CD4-positive, alpha-beta T cell (primary cell): ENCODE measurements at regions of chr5 and their contacts with region 1.

Region 1: GRCh38 chr5:154072414-154073171 is 33.8 kb downstream of the MFAP3 start:
- DNase-seq: peak; percentile 68 to 89 (median 81)
- ATAC-seq: peak; percentile 81
- H3K4me3 ChIP-seq: no peak overlapping the region
- H3K4me3 Mint-ChIP-seq: no peak overlapping the region
- H3K27ac ChIP-seq: no peak overlapping the region
- H3K27ac Mint-ChIP-seq: no peak overlapping the region
- H3K4me1 ChIP-seq: peaks cover 22% of the 10 kb centered on the region
- H3K4me1 Mint-ChIP-seq: peaks cover 17% of the 10 kb centered on the region
- H3K27me3 ChIP-seq: no peaks in the 10 kb centered on the region
- H3K27me3 Mint-ChIP-seq: no peaks in the 10 kb centered on the region
- CTCF ChIP-seq: peak; percentile 96

Region 2: DNA sequence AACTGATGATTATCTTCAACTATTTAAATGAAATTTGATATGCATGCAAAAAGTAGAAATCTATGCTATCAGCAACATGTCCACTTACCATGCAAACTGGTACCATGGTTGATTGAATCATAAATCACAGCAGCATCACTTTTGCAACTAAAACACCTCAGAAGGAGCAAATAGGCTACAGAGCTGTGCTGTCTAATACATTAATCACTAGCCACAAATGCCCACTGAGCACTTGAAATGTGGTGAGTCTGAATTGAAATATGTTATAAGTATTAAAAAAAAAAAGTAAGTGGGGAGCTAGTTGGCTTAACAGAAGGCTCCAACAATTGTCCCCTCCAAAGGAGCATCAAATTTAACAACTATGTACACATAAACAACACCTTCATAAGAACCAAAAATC is 146.4 kb before region 1 on chr5:
- CTCF ChIA-PET with region 1: no interaction called
- POLR2A ChIA-PET with region 1: no interaction called
- intact Hi-C with region 1: no loop called
- DNase-seq: no peak
- ATAC-seq: no peak
- H3K4me3 ChIP-seq: no peak overlapping the region
- H3K4me3 Mint-ChIP-seq: no peak overlapping the region
- H3K27ac ChIP-seq: no peak overlapping the region
- H3K27ac Mint-ChIP-seq: no peak overlapping the region
- H3K4me1 ChIP-seq: no peaks in the 10 kb centered on the region
- H3K4me1 Mint-ChIP-seq: no peaks in the 10 kb centered on the region
- H3K27me3 ChIP-seq: peaks cover 0 to 3% of the 10 kb centered on the region in 2 experiments
- H3K27me3 Mint-ChIP-seq: peaks cover 32% of the 10 kb centered on the region
- CTCF ChIP-seq: no peak

Region 3: DNA sequence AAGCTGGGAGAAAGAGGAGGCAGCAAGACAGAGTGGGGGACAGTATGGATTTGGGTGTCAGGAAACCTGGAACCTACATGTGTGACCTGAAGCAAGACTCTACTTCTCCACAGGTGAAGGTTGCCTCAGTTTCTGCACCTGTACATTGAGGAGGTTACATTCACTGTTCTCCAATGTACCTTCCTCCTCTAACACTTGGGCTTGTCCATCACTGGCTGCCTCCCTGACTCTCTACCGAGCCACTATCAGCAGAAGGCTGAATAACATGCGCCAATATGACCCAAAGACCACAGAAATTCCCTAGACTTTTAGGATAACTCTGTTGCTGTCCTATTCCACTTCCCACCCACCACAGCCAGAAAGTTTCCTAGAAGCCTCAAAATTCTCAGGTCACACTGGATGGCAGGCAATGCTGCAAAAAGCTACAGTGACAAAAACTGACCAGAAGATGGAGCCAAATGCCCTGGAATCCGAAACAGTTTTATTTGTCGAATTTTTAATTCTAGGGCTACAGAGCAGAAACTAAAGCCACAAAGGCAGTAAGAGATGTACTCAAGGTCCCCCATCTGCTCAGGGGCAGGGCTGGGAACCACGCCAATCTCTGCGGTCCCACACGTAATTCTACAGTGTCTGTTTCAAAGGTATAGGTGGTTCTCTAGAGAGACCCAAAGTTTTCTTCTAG is 98.3 kb before region 1 on chr5:
- CTCF ChIA-PET with region 1: no interaction called
- POLR2A ChIA-PET with region 1: no interaction called
- intact Hi-C with region 1: loop called in 1 of 2 experiments (anchors 5 kb)
- DNase-seq: peak in 5 of 14 experiments; percentile 10 to 62 (median 40)
- ATAC-seq: peak; percentile 49
- H3K4me3 ChIP-seq: no peak overlapping the region
- H3K4me3 Mint-ChIP-seq: no peak overlapping the region
- H3K27ac ChIP-seq: no peak overlapping the region
- H3K27ac Mint-ChIP-seq: no peak overlapping the region
- H3K4me1 ChIP-seq: peaks cover 3% of the 10 kb centered on the region
- H3K4me1 Mint-ChIP-seq: no peaks in the 10 kb centered on the region
- H3K27me3 ChIP-seq: peaks cover 0 to 5% of the 10 kb centered on the region in 2 experiments
- H3K27me3 Mint-ChIP-seq: peaks cover 12% of the 10 kb centered on the region
- CTCF ChIP-seq: peak; percentile 69

Region 4: GRCh38 chr5:154087257-154087656 is 14.7 kb after region 1 on chr5:
- CTCF ChIA-PET with region 1: interaction called, 23 read pairs
- POLR2A ChIA-PET with region 1: interaction called, 3 read pairs
- intact Hi-C with region 1: no loop called
- DNase-seq: no peak
- ATAC-seq: no peak
- H3K4me3 ChIP-seq: no peak overlapping the region
- H3K4me3 Mint-ChIP-seq: no peak overlapping the region
- H3K27ac ChIP-seq: no peak overlapping the region
- H3K27ac Mint-ChIP-seq: no peak overlapping the region
- H3K4me1 ChIP-seq: no peaks in the 10 kb centered on the region
- H3K4me1 Mint-ChIP-seq: peaks cover 4% of the 10 kb centered on the region
- H3K27me3 ChIP-seq: no peaks in the 10 kb centered on the region
- H3K27me3 Mint-ChIP-seq: peaks cover 22% of the 10 kb centered on the region
- CTCF ChIP-seq: no peak

Region 5: DNA sequence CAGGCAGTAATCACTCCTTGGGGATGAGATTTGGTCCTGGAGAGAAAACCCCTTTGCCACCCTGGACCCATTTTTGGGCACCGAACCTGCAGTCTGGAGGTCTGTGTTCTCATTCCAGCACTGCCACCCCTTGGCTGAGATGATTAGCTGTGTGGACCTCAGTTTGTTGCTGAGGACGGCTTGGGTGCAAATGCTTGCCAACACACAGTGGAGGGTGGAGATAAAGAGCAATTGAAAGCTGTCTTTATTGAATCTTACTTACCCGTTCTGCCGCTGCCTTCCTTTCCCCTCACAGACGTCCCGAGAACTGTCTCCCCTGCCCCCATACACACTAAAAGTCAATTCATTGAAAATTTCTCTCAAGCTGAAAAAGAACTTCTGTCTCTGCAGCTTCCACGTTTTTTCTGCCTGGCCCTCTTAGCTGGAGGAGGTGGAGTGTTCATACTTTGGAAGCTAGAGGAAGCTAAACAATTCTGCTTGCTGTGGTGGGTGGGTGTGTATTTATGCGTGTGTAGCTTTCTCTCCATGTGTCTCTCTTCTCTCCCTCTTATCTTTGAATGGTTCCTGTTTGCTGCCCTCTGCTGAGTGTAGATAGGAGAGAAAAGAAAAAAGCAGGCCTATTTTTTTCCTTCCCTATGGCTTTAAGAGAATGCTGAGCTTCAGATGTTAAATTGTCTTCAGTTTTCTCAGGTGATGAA is 124.5 kb after region 1 on chr5:
- CTCF ChIA-PET with region 1: interaction called, 11 read pairs
- POLR2A ChIA-PET with region 1: interaction called, 14 read pairs
- intact Hi-C with region 1: loop called (anchors 2 to 5 kb)
- DNase-seq: peak in 4 of 14 experiments; percentile 17 to 47 (median 44)
- ATAC-seq: peak; percentile 55
- H3K4me3 ChIP-seq: no peak overlapping the region
- H3K4me3 Mint-ChIP-seq: peak overlapping the region; percentile 37
- H3K27ac ChIP-seq: peak overlapping the region in 1 of 2 donors; percentile 68
- H3K27ac Mint-ChIP-seq: peak overlapping the region; percentile 89
- H3K4me1 ChIP-seq: peaks cover 58% of the 10 kb centered on the region
- H3K4me1 Mint-ChIP-seq: peaks cover 62% of the 10 kb centered on the region
- H3K27me3 ChIP-seq: no peaks in the 10 kb centered on the region
- H3K27me3 Mint-ChIP-seq: no peaks in the 10 kb centered on the region
- CTCF ChIP-seq: peak; percentile 45

Region 6: DNA sequence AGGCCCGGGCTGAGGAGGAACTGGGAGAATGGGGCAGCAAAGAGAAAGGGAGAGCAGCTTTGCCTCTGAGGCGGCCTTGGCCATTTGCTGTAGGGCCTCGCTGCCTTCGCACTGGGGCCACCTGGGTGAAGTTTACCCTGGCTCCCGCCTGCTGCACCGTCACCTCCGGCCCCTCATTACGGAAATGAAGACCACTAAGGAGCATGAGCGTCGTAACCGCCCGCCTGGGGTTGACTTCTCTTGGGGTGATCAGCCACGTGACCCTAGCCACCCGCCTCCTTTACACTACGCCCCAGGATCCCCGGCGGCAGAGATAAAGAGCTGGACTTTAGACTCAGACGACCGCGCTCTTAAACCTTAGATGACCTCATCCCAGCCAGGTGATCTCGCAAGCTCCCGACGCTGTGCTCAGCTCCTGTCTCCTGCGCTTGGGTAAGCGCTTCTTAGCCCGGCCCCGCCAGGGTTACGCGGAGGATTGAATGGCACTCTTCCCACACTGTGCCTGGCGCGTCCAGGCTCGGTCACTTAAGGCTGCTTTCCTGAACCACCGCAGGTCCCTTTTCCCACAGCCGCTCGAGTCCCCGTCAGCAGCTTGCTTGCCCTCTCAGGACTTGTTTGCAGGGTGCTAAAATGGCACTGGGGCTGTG is 574.6 kb after region 1 on chr5:
- CTCF ChIA-PET with region 1: interaction called, 3 read pairs
- POLR2A ChIA-PET with region 1: no interaction called
- intact Hi-C with region 1: loop called in 1 of 2 experiments (anchors 5 kb)
- DNase-seq: peak in 6 of 14 experiments; percentile 4 to 24 (median 15)
- ATAC-seq: peak; percentile 32
- H3K4me3 ChIP-seq: peak overlapping the region; percentile 48
- H3K4me3 Mint-ChIP-seq: peak overlapping the region; percentile 82
- H3K27ac ChIP-seq: no peak overlapping the region
- H3K27ac Mint-ChIP-seq: no peak overlapping the region
- H3K4me1 ChIP-seq: peaks cover 13% of the 10 kb centered on the region
- H3K4me1 Mint-ChIP-seq: peaks cover 16% of the 10 kb centered on the region
- H3K27me3 ChIP-seq: peaks cover 16% of the 10 kb centered on the region in 2 experiments
- H3K27me3 Mint-ChIP-seq: peaks cover 29% of the 10 kb centered on the region
- CTCF ChIP-seq: no peak